ENCODE measurements at regions of chr10 and their contacts with region 1.

Region 1: DNA sequence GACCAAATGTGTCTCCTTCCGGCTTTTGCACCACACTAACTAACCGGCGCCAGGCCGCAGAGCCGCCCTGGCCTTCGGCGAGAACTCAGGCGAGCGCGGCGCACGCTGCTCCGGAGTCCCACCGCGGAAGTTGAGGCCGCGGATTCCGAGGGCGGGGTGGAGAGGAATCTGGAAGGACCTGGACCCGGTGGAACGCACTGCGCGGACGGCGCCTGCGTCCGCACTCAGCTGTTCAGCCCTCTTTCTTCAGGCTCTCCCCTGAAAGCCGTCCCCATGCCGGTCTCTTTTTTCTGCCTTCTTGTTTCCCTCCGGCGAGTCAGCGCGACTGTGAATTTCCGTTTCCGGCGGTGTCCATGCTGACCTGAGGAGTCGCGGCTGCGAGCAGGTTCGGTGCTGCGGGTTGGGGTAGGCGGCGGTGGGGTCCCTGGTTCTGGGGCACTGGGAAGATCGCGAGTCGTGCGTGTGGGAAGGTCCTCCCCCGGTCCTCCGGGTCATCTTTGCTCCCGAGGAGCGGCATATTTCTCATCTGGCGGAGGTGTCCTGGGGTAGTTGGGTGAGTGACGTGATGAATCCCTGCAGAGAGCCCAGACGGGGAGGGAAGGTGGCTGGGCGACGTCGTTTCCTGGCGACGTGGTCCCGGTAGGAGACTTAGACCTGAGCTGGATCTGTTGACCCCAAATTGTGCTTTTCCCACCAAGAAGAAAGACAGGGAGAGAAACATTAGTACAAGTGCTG is at the start of gene BMS1:
- DNase-seq: peak; percentile 94 to 96 (median 95)
- H3K4me3 ChIP-seq: peak within 1 kb of the TSS; percentile 86 to 99 (median 93)
- H3K27ac ChIP-seq: peak within 1 kb of the TSS; percentile 84 to 90
- H3K4me1 ChIP-seq: peaks cover 5 to 17% (median 10%) of the 10 kb centered on the region in 4 experiments
- H3K27me3 ChIP-seq: peaks cover 0 to 2% (median 0%) of the 10 kb centered on the region in 5 experiments

Region 2: GRCh38 chr10:42753126-42753506 is 29.5 kb before region 1 on chr10:
- CTCF ChIA-PET with region 1: interaction called, 12 read pairs
- POLR2A ChIA-PET with region 1: interaction called, 5 read pairs
- DNase-seq: peak; percentile 63 to 74 (median 72)
- H3K4me3 ChIP-seq: peak overlapping the region in 6 of 7 experiments; percentile 50 to 77 (median 65)
- H3K27ac ChIP-seq: no peak overlapping the region
- H3K4me1 ChIP-seq: peaks cover 0 to 27% (median 23%) of the 10 kb centered on the region in 4 experiments
- H3K27me3 ChIP-seq: peaks cover 7 to 80% (median 30%) of the 10 kb centered on the region in 5 experiments

Measured in common myeloid progenitor, CD34-positive (primary cell).